ENCODE measurements at regions of chr5 and their contacts with region 1.

Region 1: GRCh38 chr5:149228618-149229297 is 42.9 kb upstream of the AFAP1L1 start:
- DNase-seq: peak; percentile 84
- H3K4me3 ChIP-seq: no peak overlapping the region
- H3K27ac ChIP-seq: peak overlapping the region; percentile 42
- H3K4me1 ChIP-seq: peaks cover 30% of the 10 kb centered on the region
- H3K27me3 ChIP-seq: no peaks in the 10 kb centered on the region
- CTCF ChIP-seq: peak; percentile 64 to 73
- POLR2A ChIP-seq: no peak

Region 2: DNA sequence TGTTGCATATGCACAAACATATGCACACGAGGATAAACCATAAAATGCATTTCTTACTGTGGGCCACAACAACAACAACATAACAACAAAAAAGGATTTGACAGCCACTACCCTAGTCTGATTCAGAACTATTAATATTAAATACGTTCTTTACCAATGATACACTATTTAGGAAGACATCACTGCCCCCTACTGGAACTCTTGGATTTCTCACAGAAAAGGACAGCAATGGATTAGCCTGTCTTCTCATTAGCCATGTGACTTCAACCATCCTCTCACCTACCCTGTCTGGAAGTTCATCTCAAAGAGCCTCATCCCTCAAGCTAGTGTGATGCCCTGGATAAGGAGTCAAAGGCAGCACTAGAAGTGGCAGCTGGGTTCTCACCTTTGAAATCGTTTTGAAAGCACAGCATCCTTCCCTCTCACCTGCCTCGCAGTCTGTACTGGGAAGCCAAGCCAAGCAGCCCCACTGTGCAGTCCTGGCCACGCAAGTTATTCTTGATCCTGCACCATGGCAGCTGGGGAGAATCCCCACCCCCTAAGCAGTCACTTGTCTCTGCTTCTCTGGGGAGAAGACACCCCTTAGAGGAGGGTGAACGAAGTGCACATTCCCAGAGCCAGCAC is 230.5 kb before region 1 on chr5:
- CTCF ChIA-PET with region 1: no interaction called
- POLR2A ChIA-PET with region 1: no interaction called
- dilution Hi-C with region 1: no loop called
- intact Hi-C with region 1: no loop called
- DNase-seq: peak; percentile 68
- H3K4me3 ChIP-seq: no peak overlapping the region
- H3K27ac ChIP-seq: no peak overlapping the region
- H3K4me1 ChIP-seq: peaks cover 13% of the 10 kb centered on the region
- H3K27me3 ChIP-seq: no peaks in the 10 kb centered on the region
- CTCF ChIP-seq: peak; percentile 54 to 62
- POLR2A ChIP-seq: no peak

Region 3: GRCh38 chr5:149133795-149134780 is 94.7 kb before region 1 on chr5:
- CTCF ChIA-PET with region 1: interaction called, 238 read pairs
- POLR2A ChIA-PET with region 1: no interaction called
- dilution Hi-C with region 1: no loop called
- intact Hi-C with region 1: loop called (anchors 1 kb)
- DNase-seq: peak; percentile 79
- H3K4me3 ChIP-seq: no peak overlapping the region
- H3K27ac ChIP-seq: peak overlapping the region; percentile 96
- H3K4me1 ChIP-seq: peaks cover 36% of the 10 kb centered on the region
- H3K27me3 ChIP-seq: no peaks in the 10 kb centered on the region
- CTCF ChIP-seq: no peak
- POLR2A ChIP-seq: no peak

Region 4: GRCh38 chr5:149151717-149152116 is 77.0 kb before region 1 on chr5:
- CTCF ChIA-PET with region 1: interaction called, 13 read pairs
- POLR2A ChIA-PET with region 1: no interaction called
- dilution Hi-C with region 1: no loop called
- intact Hi-C with region 1: no loop called
- DNase-seq: peak; percentile 55
- H3K4me3 ChIP-seq: no peak overlapping the region
- H3K27ac ChIP-seq: peak overlapping the region; percentile 86
- H3K4me1 ChIP-seq: peaks cover 42% of the 10 kb centered on the region
- H3K27me3 ChIP-seq: no peaks in the 10 kb centered on the region
- CTCF ChIP-seq: peak; percentile 20 to 32
- POLR2A ChIP-seq: no peak

Region 5: GRCh38 chr5:149212198-149212951 is 16.4 kb before region 1 on chr5:
- CTCF ChIA-PET with region 1: interaction called, 18 read pairs
- POLR2A ChIA-PET with region 1: no interaction called
- dilution Hi-C with region 1: no loop called
- intact Hi-C with region 1: loop called (anchors 1 kb)
- DNase-seq: peak; percentile 93
- H3K4me3 ChIP-seq: no peak overlapping the region
- H3K27ac ChIP-seq: peak overlapping the region; percentile 64
- H3K4me1 ChIP-seq: peaks cover 36% of the 10 kb centered on the region
- H3K27me3 ChIP-seq: no peaks in the 10 kb centered on the region
- CTCF ChIP-seq: no peak
- POLR2A ChIP-seq: no peak

Region 6: DNA sequence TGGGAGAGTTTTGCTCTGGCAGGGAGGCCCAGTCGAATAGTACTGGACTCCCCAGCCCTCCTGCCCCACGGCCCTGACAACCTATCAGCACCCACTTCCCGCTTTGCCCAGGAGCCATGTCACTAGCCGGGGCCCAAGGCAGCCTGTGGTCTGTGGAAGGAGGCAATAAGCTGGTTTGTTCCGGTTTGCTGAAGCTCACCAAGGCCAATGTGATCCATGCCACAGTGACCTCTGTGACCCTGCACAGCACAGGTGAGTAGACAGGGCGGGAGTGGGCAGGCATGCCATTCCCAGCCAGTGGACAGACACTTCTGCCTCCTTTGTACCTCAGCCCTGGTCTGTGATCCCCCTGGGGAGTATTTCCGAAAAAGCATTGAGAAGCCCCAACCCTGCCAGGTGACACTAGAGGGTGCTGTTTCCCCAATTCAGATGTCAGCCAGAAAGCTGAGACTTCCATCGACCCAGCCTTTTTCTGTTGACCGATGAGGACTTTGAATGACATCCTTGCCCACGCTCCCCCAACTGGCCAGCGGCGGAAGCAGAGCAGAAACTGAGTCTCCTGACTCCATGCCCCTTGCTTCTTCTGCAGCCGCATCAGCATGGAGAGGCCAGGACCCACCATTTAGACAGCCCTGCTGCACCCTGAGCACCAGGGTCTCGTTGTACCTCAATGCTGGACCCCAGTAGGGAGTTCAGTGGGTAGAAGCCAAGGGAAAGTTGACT is 138.7 kb after region 1 on chr5:
- CTCF ChIA-PET with region 1: no interaction called
- POLR2A ChIA-PET with region 1: no interaction called
- dilution Hi-C with region 1: no loop called
- intact Hi-C with region 1: loop called (anchors 1 kb)
- DNase-seq: peak; percentile 64
- H3K4me3 ChIP-seq: no peak overlapping the region
- H3K27ac ChIP-seq: no peak overlapping the region
- H3K4me1 ChIP-seq: no peaks in the 10 kb centered on the region
- H3K27me3 ChIP-seq: no peaks in the 10 kb centered on the region
- CTCF ChIP-seq: peak; percentile 76 to 83
- POLR2A ChIP-seq: no peak

Measured in endothelial cell of umbilical vein (primary cell).